Left cardiac atrium (tissue), 4 donors: ENCODE measurements at regions of chr21 and their contacts with region 1.

Region 1: DNA sequence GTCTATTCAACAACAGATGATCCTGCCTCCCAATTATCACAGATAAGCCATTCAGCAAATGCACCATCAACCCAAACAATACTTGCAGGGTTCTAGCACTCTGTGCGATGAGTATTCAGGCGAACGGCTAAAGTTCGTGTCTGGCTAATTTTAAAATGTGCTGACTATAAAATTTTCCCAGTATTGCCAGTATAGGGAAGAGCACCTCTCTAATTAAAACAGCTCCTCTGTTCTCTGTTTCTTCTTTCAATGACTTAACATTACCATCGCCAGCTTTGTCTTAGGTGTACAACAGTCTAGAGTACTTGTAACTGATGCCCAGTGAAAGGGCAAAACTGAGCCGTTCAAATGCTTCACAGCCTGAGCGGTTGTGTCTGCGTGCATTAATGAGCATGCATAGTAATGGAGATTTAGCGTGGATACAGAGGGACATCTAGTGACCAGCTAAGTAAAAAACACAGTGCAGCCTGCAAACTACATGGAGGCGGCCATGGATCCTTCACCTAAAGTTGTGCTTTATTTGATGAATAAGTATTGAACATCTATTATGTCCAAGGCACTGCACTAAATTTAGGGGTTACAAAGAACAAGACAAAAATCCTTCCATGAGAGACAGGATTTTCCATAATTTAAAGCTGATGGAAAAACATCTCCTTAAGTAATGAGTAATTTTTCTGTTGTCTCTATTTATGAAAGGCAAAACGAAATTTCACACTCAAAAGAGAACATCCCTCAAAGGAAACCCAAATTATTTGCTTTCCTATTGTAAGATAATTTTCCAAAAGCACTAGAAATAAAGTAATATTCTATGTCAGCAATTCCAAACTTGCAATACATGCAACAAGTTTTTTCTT is 120.0 kb downstream of the SETD4 start:
- DNase-seq: peak; percentile 27
- ATAC-seq: peak; percentile 95 to 97

Region 2: DNA sequence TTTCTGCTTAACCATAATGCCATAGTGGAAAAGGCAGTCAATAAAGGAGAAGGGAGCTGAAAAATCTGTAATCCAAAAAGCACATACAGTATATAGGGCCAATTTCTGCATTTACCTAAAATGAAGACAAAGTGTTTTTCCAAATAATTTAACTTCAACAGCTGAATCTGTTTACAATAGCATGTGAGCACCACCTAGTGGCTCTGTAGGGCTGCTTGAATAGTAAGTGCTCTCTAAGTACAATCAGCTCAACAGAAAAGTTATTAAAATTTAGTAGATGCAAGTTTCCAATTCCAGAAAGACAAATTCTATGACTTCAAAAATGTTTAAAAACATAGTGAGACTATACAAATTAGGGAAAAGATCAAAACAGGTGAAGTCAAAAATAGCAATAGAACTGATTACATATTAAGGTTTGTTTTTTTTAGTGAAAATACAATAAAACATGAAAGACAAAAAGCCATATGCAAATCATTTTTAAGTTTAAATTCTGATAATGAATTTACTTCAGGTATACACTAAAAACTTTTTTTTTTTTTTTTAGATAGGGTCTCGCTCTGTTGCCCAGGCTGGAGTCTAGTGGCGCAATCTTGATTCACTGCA is 100.0 kb before region 1 on chr21:
- intact Hi-C with region 1: loop called in 1 of 2 experiments (anchors 10 kb)
- DNase-seq: peak; percentile 71
- ATAC-seq: peak; percentile 66 to 75

Region 3: DNA sequence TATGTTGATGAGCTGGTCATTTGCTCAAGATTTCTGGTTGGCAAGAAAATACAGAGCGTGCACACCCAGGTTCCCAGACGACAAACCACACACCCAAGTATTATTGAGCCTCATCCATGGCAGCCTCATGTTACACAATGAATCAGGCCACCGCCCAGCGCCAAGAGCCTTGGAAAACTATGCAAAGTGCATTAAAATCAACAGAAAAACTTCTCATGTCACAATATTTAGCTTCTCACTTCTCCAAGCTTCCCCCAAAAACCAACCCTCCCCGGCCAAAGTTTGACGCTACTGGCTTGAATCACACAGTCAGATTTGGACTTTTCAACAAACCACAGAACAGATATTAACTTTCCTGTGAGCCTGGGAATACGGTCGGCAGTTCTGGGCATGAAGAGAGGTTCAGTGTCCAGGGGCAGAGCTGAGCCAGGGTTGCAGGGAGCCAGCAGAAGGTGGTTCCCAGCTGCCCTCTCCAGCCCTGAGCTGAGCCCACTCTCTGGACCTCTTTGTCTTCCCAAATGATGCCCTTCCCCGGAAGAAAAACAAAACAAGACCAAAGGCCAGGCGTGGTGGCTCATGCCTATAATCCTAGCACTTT is 48.9 kb after region 1 on chr21:
- intact Hi-C with region 1: no loop called
- DNase-seq: peak; percentile 53
- ATAC-seq: peak; percentile 30 to 44